ENCODE measurements at regions of chr1 and their contacts with region 1.

Region 1: GRCh38 chr1:62589321-62589720 is 8.0 kb upstream of the ANGPTL3 start:
- DNase-seq: peak; percentile 78
- ATAC-seq: no peak
- H3K4me3 ChIP-seq: no peak overlapping the region
- H3K27ac ChIP-seq: no peak overlapping the region
- H3K4me1 ChIP-seq: no peaks in the 10 kb centered on the region; the same call in 1 of the 2 replicates
- H3K27me3 ChIP-seq: no peaks in the 10 kb centered on the region
- CTCF ChIP-seq: no peak
- POLR2A ChIP-seq: no peak
- RAD21 ChIP-seq: no peak

Region 2: GRCh38 chr1:62573675-62574074 is 15.6 kb before region 1 on chr1:
- CTCF ChIA-PET with region 1: no interaction called
- POLR2A ChIA-PET with region 1: no interaction called
- dilution Hi-C with region 1: no loop called
- in situ Hi-C with region 1: no loop called
- intact Hi-C with region 1: loop called (anchors 1 kb)
- DNase-seq: peak; percentile 7
- ATAC-seq: no peak
- H3K4me3 ChIP-seq: no peak overlapping the region
- H3K27ac ChIP-seq: no peak overlapping the region
- H3K4me1 ChIP-seq: no peaks in the 10 kb centered on the region
- H3K27me3 ChIP-seq: no peaks in the 10 kb centered on the region
- CTCF ChIP-seq: no peak
- POLR2A ChIP-seq: no peak
- RAD21 ChIP-seq: no peak